CD8-positive, alpha-beta memory T cell (primary cell): ENCODE measurements at regions of chr20 and their contacts with region 1.

Region 1: DNA sequence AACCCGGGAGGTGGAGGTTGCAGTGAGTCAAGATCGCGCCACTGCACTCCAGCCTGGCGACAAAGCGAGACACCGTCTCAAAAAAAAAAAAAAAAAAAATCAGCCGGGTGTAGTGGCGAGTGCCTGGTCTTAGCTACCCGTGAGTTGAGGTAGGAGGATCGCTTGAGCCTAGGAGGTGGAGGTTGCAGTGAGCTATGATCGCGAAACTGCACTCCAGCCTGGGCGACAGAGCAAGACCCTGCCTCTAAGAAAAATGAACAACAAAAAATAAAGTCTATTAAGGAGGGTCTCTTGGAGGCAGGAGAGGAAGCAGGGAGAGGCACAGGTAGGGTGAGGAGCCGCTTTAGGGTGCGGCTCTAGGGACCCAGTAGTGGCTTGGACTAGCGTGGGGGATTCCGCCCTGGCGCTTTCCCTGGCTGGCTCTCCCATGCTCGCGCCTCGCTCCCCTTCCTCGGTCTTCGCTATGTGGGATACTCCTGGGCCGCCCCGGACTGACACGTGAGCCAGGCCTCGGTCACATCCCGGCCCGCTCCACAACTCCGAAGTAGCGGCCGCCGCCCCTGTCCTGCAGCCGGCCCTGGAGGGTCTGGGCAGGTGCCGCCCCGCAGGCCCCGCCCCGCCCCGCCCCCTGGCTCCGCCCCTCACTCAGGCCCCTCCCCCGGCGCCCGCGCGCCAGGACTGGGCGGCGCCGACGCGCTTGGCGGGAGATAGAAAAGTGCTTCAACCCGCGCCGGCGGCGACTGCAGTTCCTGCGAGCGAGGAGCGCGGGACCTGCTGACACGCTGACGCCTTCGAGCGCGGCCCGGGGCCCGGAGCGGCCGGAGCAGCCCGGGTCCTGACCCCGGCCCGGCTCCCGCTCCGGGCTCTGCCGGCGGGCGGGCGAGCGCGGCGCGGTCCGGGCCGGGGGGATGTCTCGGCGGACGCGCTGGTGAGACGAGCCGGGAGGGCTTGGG is at the start of gene MYBL2:
- DNase-seq: peak; percentile 55 to 76 (median 66)
- H3K4me3 ChIP-seq: peak within 1 kb of the TSS; percentile 53
- H3K4me3 Mint-ChIP-seq: peak within 1 kb of the TSS; percentile 29 to 77 (median 59)
- H3K27ac ChIP-seq: peak within 1 kb of the TSS; percentile 38
- H3K27ac Mint-ChIP-seq: peak within 1 kb of the TSS in 1 of 8 donors; percentile 40
- H3K4me1 ChIP-seq: peaks cover 8% of the 10 kb centered on the region
- H3K4me1 Mint-ChIP-seq: peaks cover 0 to 4% (median 4%) of the 10 kb centered on the region in 3 donors
- H3K27me3 ChIP-seq: peaks cover 6% of the 10 kb centered on the region
- H3K27me3 Mint-ChIP-seq: peaks cover 21 to 32% of the 10 kb centered on the region in 2 donors
- total RNA-seq, gene MYBL2: 78.3 to 78.6 TPM

Region 2: DNA sequence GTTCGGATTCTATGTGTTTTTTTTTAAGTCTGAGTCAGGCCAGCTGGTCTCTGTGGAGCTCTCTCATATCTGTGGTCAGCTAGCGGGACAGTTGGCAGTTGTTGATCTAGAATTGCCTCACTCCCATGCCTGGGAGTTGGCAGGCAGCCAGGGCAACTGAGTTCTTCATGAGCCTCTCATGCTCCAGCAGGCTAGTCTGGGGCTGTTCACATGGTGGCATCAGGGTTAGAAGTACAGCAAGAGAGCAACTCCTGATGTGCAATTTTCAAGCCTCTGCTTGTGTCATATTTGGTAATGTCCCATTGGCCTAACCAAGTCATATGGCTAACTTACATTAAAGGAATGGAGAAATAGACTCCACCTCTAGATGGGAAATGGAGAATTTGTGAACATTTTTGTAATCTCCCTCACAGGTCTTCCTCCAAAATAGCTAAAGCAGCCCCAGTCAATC is 82.6 kb before region 1 on chr20:
- CTCF ChIA-PET with region 1: no interaction called
- POLR2A ChIA-PET with region 1: no interaction called
- DNase-seq: no peak
- H3K4me3 ChIP-seq: no peak overlapping the region
- H3K4me3 Mint-ChIP-seq: no peak overlapping the region
- H3K27ac ChIP-seq: peak overlapping the region; percentile 52
- H3K27ac Mint-ChIP-seq: no peak overlapping the region
- H3K4me1 ChIP-seq: no peaks in the 10 kb centered on the region
- H3K4me1 Mint-ChIP-seq: peaks cover 0 to 6% (median 0%) of the 10 kb centered on the region in 3 donors
- H3K27me3 ChIP-seq: no peaks in the 10 kb centered on the region
- H3K27me3 Mint-ChIP-seq: peaks cover 5 to 16% of the 10 kb centered on the region in 2 donors

Region 3: GRCh38 chr20:43787937-43788336 is 121.3 kb after region 1 on chr20:
- CTCF ChIA-PET with region 1: no interaction called
- POLR2A ChIA-PET with region 1: interaction called, 11 read pairs
- DNase-seq: no peak
- H3K4me3 ChIP-seq: no peak overlapping the region
- H3K4me3 Mint-ChIP-seq: peak overlapping the region in 2 of 7 donors; percentile 0 to 10
- H3K27ac ChIP-seq: no peak overlapping the region
- H3K27ac Mint-ChIP-seq: peak overlapping the region in 3 of 8 donors; percentile 3 to 36 (median 34)
- H3K4me1 ChIP-seq: no peaks in the 10 kb centered on the region
- H3K4me1 Mint-ChIP-seq: peaks cover 9 to 24% (median 12%) of the 10 kb centered on the region in 3 donors
- H3K27me3 ChIP-seq: no peaks in the 10 kb centered on the region
- H3K27me3 Mint-ChIP-seq: peaks cover 4 to 6% of the 10 kb centered on the region in 2 donors